ENCODE measurements at regions of chr3 and their contacts with region 1.

Region 1: DNA sequence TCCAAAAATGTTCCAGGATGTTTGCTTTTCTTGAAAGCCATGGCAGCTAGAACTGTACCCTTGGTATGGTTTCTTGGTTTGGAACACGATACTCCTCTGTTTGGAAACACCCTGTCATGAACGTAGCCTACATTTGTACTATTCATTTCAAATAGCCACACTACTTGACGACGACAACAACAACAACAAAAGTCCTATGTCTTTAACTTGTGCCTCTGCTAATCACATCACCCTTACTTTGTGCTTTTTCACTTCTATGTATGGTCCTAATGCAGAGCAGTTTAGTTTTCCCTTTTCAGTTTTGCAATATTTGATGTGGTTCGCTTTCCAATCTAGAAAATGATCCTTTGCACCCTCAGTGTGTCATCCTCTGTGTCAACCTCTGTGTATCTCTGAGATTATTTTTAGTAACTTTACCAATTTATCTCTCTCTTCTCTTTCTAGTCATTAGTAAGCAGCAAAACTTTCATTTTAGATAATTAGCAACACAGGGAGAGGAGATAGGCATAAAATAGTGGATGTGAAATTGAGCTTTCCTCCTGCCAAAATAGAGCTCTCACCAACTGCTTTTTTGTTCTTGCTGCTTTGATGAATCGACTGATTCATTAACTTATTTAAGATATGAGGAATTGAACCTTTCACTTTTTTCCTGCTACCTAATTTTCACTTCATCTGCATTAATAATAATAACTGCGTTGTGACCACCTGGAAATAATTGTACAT is 44.1 kb upstream of the TP63 start:
- DNase-seq: no peak
- H3K4me3 Mint-ChIP-seq: no peak overlapping the region
- H3K27ac Mint-ChIP-seq: peak overlapping the region; percentile 15
- H3K4me1 Mint-ChIP-seq: peaks cover 28% of the 10 kb centered on the region
- H3K27me3 Mint-ChIP-seq: peaks cover 6% of the 10 kb centered on the region

Region 2: GRCh38 chr3:189570916-189571315 is 16.2 kb before region 1 on chr3:
- CTCF ChIA-PET with region 1: interaction called, 4 read pairs
- intact Hi-C with region 1: loop called (anchors 1 kb)
- DNase-seq: no peak
- H3K4me3 Mint-ChIP-seq: no peak overlapping the region
- H3K27ac Mint-ChIP-seq: no peak overlapping the region
- H3K4me1 Mint-ChIP-seq: peaks cover 30% of the 10 kb centered on the region
- H3K27me3 Mint-ChIP-seq: no peaks in the 10 kb centered on the region

Measured in activated naive CD4-positive, alpha-beta T cell treated with anti-CD3 and anti-CD28 coated beads for 36 hours (primary cell).